HCT116 (cell line): ENCODE measurements at regions of chr22 and their contacts with region 1.

Region 1: GRCh38 chr22:41403532-41404318 is 22.0 kb downstream of the TEF start:
- DNase-seq: peak; percentile 81
- ATAC-seq: peak; percentile 98
- H3K4me3 ChIP-seq: no peak overlapping the region
- H3K27ac ChIP-seq: no peak overlapping the region
- H3K4me1 ChIP-seq: peaks cover 11 to 19% of the 10 kb centered on the region in 2 experiments
- H3K27me3 ChIP-seq: no peaks in the 10 kb centered on the region
- CTCF ChIP-seq: peak; percentile 91 to 96 (median 94)
- POLR2A ChIP-seq: no peak
- RAD21 ChIP-seq: peak; percentile 99

Region 2: GRCh38 chr22:41352051-41352450 is 51.7 kb before region 1 on chr22:
- CTCF ChIA-PET with region 1: no interaction called
- POLR2A ChIA-PET with region 1: no interaction called
- RAD21 ChIA-PET with region 1: no interaction called
- intact Hi-C with region 1: no loop called
- DNase-seq: peak; percentile 6
- ATAC-seq: peak; percentile 61
- H3K4me3 ChIP-seq: no peak overlapping the region
- H3K27ac ChIP-seq: peak overlapping the region; percentile 19; the same call in 1 of the 2 replicates
- H3K4me1 ChIP-seq: peaks cover 0 to 19% of the 10 kb centered on the region in 2 experiments; a peak in 2 of 4 replicates
- H3K27me3 ChIP-seq: no peaks in the 10 kb centered on the region
- CTCF ChIP-seq: no peak
- POLR2A ChIP-seq: no peak
- RAD21 ChIP-seq: no peak

Region 3: GRCh38 chr22:41501209-41501608 is 97.5 kb after region 1 on chr22:
- CTCF ChIA-PET with region 1: interaction called, 24 read pairs
- POLR2A ChIA-PET with region 1: no interaction called
- RAD21 ChIA-PET with region 1: interaction called in 1 of 2 experiments, 4 read pairs
- intact Hi-C with region 1: loop called (anchors 1 kb)
- DNase-seq: no peak
- ATAC-seq: peak; percentile 94
- H3K4me3 ChIP-seq: no peak overlapping the region
- H3K27ac ChIP-seq: no peak overlapping the region
- H3K4me1 ChIP-seq: no peaks in the 10 kb centered on the region
- H3K27me3 ChIP-seq: no peaks in the 10 kb centered on the region
- CTCF ChIP-seq: peak; percentile 18 to 48 (median 36); a peak in 5 of 6 replicates
- POLR2A ChIP-seq: no peak
- RAD21 ChIP-seq: peak; percentile 68

Region 4: GRCh38 chr22:41517172-41518047 is 113.7 kb after region 1 on chr22:
- CTCF ChIA-PET with region 1: interaction called, 90 read pairs
- POLR2A ChIA-PET with region 1: interaction called, 3 read pairs
- RAD21 ChIA-PET with region 1: interaction called, 7 to 18 read pairs
- intact Hi-C with region 1: loop called (anchors 1 kb)
- DNase-seq: no peak
- ATAC-seq: peak; percentile 53
- H3K4me3 ChIP-seq: peak overlapping the region in 1 of 2 experiments; percentile 8; a peak in 1 of 4 replicates
- H3K27ac ChIP-seq: peak overlapping the region; percentile 53
- H3K4me1 ChIP-seq: peaks cover 19 to 32% of the 10 kb centered on the region in 2 experiments
- H3K27me3 ChIP-seq: no peaks in the 10 kb centered on the region
- CTCF ChIP-seq: peak; percentile 74 to 96 (median 85); a peak in 5 of 6 replicates
- POLR2A ChIP-seq: no peak
- RAD21 ChIP-seq: peak; percentile 96

Region 5: GRCh38 chr22:41526837-41527799 is 123.4 kb after region 1 on chr22:
- CTCF ChIA-PET with region 1: interaction called, 35 read pairs
- POLR2A ChIA-PET with region 1: interaction called, 4 read pairs
- RAD21 ChIA-PET with region 1: interaction called, 4 read pairs
- intact Hi-C with region 1: no loop called
- DNase-seq: no peak
- ATAC-seq: peak; percentile 65
- H3K4me3 ChIP-seq: no peak overlapping the region
- H3K27ac ChIP-seq: peak overlapping the region; percentile 55; the same call in 1 of the 2 replicates
- H3K4me1 ChIP-seq: no peaks in the 10 kb centered on the region
- H3K27me3 ChIP-seq: no peaks in the 10 kb centered on the region
- CTCF ChIP-seq: peak; percentile 86 to 95 (median 92)
- POLR2A ChIP-seq: no peak
- RAD21 ChIP-seq: peak; percentile 72

Region 6: DNA sequence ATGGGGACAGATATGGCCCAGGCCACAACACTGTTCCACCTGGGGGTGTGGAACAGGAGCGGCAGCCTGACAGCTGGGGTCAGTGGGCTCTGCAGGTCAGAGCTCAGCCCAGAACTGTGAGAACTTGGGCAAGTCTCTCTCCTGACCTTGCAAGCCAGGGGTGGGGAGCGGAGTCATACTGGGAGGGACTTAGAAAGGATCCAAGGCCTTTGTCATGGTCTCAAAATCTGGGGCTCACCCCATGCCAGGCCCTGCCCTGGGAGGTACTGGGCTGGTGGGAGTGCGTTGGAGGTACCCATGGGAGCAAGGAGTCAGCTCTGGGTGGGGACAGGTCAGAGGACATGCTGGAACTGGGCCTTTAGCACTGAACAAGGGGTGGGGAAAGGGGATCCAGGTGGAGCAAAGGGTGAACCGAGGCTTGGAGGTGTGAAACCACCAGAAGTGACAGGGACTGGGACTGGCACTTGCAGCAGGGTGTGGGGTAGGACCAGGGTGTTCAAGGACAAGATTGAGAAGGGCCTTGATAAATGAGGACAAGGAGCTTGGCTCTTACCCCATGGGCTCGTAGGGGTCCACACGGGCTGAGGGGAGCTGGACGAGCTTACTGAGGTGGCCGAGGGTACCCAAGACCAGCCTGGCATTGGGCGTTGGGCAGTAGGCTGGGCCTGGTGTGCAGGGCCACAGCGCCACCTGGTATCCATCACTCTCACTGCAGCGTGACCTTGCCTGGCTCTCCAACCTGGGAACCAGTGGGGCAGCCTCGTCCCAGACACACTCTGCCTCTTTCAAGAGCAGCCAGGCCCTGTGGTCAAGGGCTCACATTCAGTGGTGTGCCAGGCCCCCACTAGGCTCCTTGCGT is 193.3 kb after region 1 on chr22:
- CTCF ChIA-PET with region 1: interaction called, 10 read pairs
- POLR2A ChIA-PET with region 1: no interaction called
- RAD21 ChIA-PET with region 1: no interaction called
- intact Hi-C with region 1: loop called (anchors 5 kb)
- DNase-seq: no peak
- ATAC-seq: peak; percentile 94
- H3K4me3 ChIP-seq: no peak overlapping the region
- H3K27ac ChIP-seq: no peak overlapping the region
- H3K4me1 ChIP-seq: peaks cover 0 to 11% of the 10 kb centered on the region in 2 experiments; a peak in 2 of 4 replicates
- H3K27me3 ChIP-seq: no peaks in the 10 kb centered on the region
- CTCF ChIP-seq: peak; percentile 84 to 93 (median 88)
- POLR2A ChIP-seq: no peak
- RAD21 ChIP-seq: peak; percentile 94